ENCODE measurements at regions of chr13 and their contacts with region 1.

Region 1: DNA sequence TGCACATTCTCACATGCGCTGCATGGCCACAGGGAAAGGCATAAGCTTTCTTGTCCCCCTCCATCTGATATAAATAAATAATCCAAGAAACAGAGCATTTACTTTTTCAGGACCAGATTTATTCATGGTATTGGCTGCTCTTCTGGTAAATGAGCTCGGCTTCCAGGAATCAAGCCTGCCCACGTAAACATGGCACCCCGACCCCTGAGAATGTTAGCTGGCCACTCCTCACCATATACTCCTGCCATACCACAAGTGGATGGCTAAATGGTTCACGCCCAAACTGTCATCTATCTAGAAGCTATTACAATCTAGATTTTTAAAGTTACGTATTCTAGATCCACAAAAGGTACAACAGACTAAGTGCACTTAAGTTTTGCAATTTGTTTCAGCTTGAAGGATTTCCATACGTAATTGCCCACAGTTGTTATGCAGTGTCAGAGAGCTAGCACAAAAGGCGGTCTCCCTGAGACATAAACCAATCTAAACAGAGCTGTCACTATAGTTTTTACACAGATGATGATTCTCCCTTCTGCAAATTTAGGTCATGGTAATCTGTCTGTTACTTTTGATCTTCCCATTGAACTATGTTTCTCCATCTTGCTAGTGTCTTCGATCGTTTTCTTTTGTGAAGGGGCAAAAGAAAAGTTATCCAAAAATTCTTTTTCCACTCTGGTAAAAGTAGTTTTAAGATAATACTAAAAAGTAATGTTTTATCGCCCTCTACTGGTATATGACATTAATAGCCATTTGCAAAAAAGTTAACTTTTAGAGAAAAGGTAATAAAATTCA is 16.2 kb upstream of the FOXO1 start:
- DNase-seq: peak; percentile 35
- ATAC-seq: peak; percentile 44; the same call in 1 of the 2 replicates
- H3K4me3 ChIP-seq: no peak overlapping the region
- H3K27ac ChIP-seq: no peak overlapping the region
- H3K4me1 ChIP-seq: no peaks in the 10 kb centered on the region
- H3K27me3 ChIP-seq: no peaks in the 10 kb centered on the region; the same call in 1 of the 2 replicates
- CTCF ChIP-seq: peak; percentile 62
- POLR2A ChIP-seq: no peak
- RAD21 ChIP-seq: peak; percentile 56

Region 2: DNA sequence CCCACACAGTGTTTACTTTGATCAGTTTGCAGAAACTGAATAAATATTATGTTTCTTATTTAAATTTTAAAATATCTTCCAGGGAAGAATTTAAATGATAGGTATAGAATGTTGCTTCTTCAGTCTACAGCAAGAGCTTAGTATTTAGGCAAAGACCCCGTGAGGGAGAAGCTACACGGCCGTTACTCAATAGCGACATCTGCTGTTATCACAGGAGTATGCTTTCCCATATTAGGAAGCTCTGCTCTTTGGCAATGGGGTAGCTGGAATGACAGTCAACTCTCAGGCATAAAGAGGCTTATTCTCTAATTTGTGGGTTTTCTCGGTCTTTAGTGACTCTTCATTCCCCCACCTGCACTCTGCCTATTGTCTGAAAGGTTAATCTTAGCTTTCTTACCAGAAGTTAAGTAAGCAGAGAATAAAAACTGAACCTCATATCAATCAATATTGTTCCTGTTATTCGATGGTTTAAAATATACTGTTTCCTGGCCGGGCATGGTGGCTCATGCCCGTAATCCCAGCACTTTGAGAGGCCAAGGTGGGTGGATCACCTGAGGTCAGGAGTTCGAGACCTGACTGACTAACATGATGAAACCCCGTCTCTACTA is 1066.5 kb before region 1 on chr13:
- CTCF ChIA-PET with region 1: no interaction called
- POLR2A ChIA-PET with region 1: no interaction called
- dilution Hi-C with region 1: no loop called
- in situ Hi-C with region 1: no loop called
- intact Hi-C with region 1: loop called (anchors 2 kb)
- DNase-seq: peak; percentile 68
- ATAC-seq: peak; percentile 92
- H3K4me3 ChIP-seq: no peak overlapping the region
- H3K27ac ChIP-seq: no peak overlapping the region
- H3K4me1 ChIP-seq: no peaks in the 10 kb centered on the region
- H3K27me3 ChIP-seq: peaks cover 4% of the 10 kb centered on the region; the same call in 1 of the 2 replicates
- CTCF ChIP-seq: peak; percentile 93
- POLR2A ChIP-seq: no peak
- RAD21 ChIP-seq: peak; percentile 89

Region 3: GRCh38 chr13:39684531-39685137 is 998.0 kb before region 1 on chr13:
- CTCF ChIA-PET with region 1: interaction called, 7 read pairs
- POLR2A ChIA-PET with region 1: no interaction called
- dilution Hi-C with region 1: no loop called
- in situ Hi-C with region 1: loop called (anchors 25 kb)
- intact Hi-C with region 1: loop called (anchors 1 kb)
- DNase-seq: peak; percentile 65
- ATAC-seq: peak; percentile 54
- H3K4me3 ChIP-seq: no peak overlapping the region
- H3K27ac ChIP-seq: no peak overlapping the region
- H3K4me1 ChIP-seq: peaks cover 3% of the 10 kb centered on the region; the same call in 1 of the 2 replicates
- H3K27me3 ChIP-seq: no peaks in the 10 kb centered on the region
- CTCF ChIP-seq: peak; percentile 49
- POLR2A ChIP-seq: no peak
- RAD21 ChIP-seq: peak; percentile 50

Region 4: GRCh38 chr13:39942552-39943273 is 739.9 kb before region 1 on chr13:
- CTCF ChIA-PET with region 1: interaction called, 6 read pairs
- POLR2A ChIA-PET with region 1: no interaction called
- dilution Hi-C with region 1: no loop called
- in situ Hi-C with region 1: loop called (anchors 10 kb)
- intact Hi-C with region 1: loop called (anchors 1 kb)
- DNase-seq: peak; percentile 57
- ATAC-seq: peak; percentile 99
- H3K4me3 ChIP-seq: no peak overlapping the region
- H3K27ac ChIP-seq: no peak overlapping the region
- H3K4me1 ChIP-seq: no peaks in the 10 kb centered on the region
- H3K27me3 ChIP-seq: no peaks in the 10 kb centered on the region
- CTCF ChIP-seq: peak; percentile 99
- POLR2A ChIP-seq: no peak
- RAD21 ChIP-seq: peak; percentile 65

Region 5: DNA sequence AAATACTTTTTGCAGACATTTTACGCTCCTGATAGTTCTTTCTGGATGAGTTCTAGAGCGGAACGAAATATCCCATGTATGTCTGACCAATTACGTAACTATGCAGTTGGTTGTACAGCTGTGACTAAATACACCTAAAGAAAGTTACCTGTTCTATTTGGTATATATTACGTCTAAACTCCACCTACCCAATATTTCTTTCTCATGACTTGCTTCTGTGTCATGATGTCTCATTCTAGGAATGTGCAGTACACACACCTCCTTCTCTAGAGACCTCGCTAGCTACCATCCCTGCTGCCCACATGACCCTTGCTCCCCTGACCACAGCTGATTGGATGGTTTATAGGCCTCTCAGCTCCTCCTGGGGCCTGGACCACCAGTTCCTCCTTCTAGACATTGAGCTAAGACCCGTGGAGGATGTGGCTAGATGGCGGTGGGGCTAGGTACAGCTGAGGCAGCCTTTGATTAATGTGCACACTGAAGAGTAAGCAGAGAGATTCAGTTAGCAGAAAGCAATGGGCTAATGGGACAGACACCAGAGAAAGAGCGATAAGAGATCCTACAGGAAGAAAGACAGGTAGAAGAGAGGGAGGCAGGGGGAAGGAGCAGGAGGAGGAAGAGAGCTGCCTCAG is 605.1 kb before region 1 on chr13:
- CTCF ChIA-PET with region 1: no interaction called
- POLR2A ChIA-PET with region 1: no interaction called
- dilution Hi-C with region 1: no loop called
- in situ Hi-C with region 1: loop called (anchors 5 kb)
- intact Hi-C with region 1: no loop called
- DNase-seq: no peak
- ATAC-seq: no peak
- H3K4me3 ChIP-seq: no peak overlapping the region
- H3K27ac ChIP-seq: no peak overlapping the region
- H3K4me1 ChIP-seq: no peaks in the 10 kb centered on the region
- H3K27me3 ChIP-seq: no peaks in the 10 kb centered on the region
- CTCF ChIP-seq: no peak
- POLR2A ChIP-seq: no peak
- RAD21 ChIP-seq: no peak

Region 6: GRCh38 chr13:40388617-40389016 is 294.0 kb before region 1 on chr13:
- CTCF ChIA-PET with region 1: no interaction called
- POLR2A ChIA-PET with region 1: no interaction called
- dilution Hi-C with region 1: no loop called
- in situ Hi-C with region 1: no loop called
- intact Hi-C with region 1: no loop called
- DNase-seq: peak; percentile 3
- ATAC-seq: no peak
- H3K4me3 ChIP-seq: no peak overlapping the region
- H3K27ac ChIP-seq: no peak overlapping the region
- H3K4me1 ChIP-seq: 0 out of 2 replicates have a peak, but pooled peaks cover 2% of the 10 kb centered on the region
- H3K27me3 ChIP-seq: peaks cover 4% of the 10 kb centered on the region; the same call in 1 of the 2 replicates
- CTCF ChIP-seq: no peak
- POLR2A ChIP-seq: no peak
- RAD21 ChIP-seq: no peak

Region 7: DNA sequence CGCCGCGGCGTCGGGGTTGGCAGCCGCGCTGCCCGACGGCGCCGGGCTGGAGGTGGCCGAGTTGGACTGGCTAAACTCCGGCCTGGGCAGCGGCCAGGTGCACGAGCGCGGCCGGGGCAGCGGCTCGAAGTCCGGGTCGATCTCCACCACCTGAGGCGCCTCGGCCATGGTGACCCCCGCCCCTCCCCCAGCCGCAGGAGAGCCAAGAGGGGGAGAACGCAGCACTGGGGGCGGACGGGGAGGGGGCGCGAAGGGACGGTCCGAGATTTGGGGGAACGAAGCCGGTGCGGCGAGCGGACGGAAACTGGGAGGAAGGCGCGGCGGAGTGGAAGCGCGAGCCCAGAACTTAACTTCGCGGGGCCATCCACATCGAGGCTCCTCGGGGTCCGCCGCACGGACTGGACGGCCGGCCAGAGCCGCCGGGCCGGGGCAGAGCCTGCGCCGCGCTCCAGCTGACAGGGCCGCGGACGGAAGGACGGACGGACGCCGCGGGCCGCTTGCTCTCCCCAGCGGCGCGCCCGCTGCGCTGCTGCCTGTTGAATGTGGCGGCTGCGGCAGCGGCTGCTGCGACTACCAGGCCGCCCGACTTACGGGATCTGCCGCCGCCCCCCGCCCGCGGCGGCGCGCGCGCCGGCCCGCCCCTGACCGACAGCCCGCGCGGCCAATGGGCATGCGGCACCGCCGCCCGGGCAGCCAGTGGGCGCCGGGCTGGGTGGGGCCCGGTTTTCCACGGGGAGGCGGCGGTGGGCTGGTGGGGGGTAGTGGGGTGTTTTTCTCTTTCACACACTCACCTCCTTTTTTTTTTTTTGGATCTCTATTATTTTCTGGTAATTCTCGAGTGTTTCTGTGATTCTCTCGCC is 16.4 kb before region 1 on chr13 and contains the start of gene FOXO1:
- CTCF ChIA-PET with region 1: no interaction called
- POLR2A ChIA-PET with region 1: no interaction called
- dilution Hi-C with region 1: no loop called
- in situ Hi-C with region 1: no loop called
- intact Hi-C with region 1: no loop called
- DNase-seq: peak; percentile 74
- ATAC-seq: peak; percentile 98
- H3K4me3 ChIP-seq: peak within 1 kb of the TSS; percentile 96
- H3K27ac ChIP-seq: no peak within 1 kb of the TSS
- H3K4me1 ChIP-seq: peaks cover 2% of the 10 kb centered on the region; the same call in 1 of the 2 replicates
- H3K27me3 ChIP-seq: peaks cover 49% of the 10 kb centered on the region
- CTCF ChIP-seq: no peak
- POLR2A ChIP-seq: no peak
- RAD21 ChIP-seq: no peak
- total RNA-seq, gene FOXO1: under 0.01 and 0.18 TPM in 2 replicates

Region 8: GRCh38 chr13:41029629-41030028 is 347.0 kb after region 1 on chr13:
- CTCF ChIA-PET with region 1: no interaction called
- POLR2A ChIA-PET with region 1: no interaction called
- dilution Hi-C with region 1: no loop called
- in situ Hi-C with region 1: no loop called
- intact Hi-C with region 1: no loop called
- DNase-seq: no peak
- ATAC-seq: no peak
- H3K4me3 ChIP-seq: no peak overlapping the region
- H3K27ac ChIP-seq: no peak overlapping the region
- H3K4me1 ChIP-seq: no peaks in the 10 kb centered on the region; the same call in 1 of the 2 replicates
- H3K27me3 ChIP-seq: no peaks in the 10 kb centered on the region
- CTCF ChIP-seq: no peak
- POLR2A ChIP-seq: no peak
- RAD21 ChIP-seq: no peak

Measured in IMR-90 (cell line).